ENCODE measurements at regions of chr2 and their contacts with region 1.

Region 1: GRCh38 chr2:161992526-161992925 is 81.5 kb downstream of the DPP4 start:
- H3K4me3 Mint-ChIP-seq: peak overlapping the region; percentile 27
- H3K27ac Mint-ChIP-seq: peak overlapping the region; percentile 85
- H3K4me1 Mint-ChIP-seq: peaks cover 30% of the 10 kb centered on the region
- H3K27me3 Mint-ChIP-seq: peaks cover 2% of the 10 kb centered on the region

Region 2: GRCh38 chr2:161954103-161954502 is 38.4 kb before region 1 on chr2:
- intact Hi-C with region 1: loop called (anchors 5 kb)
- H3K4me3 Mint-ChIP-seq: no peak overlapping the region
- H3K27ac Mint-ChIP-seq: no peak overlapping the region
- H3K4me1 Mint-ChIP-seq: peaks cover 20% of the 10 kb centered on the region
- H3K27me3 Mint-ChIP-seq: peaks cover 1% of the 10 kb centered on the region

Region 3: GRCh38 chr2:161961061-161961460 is 31.5 kb before region 1 on chr2:
- intact Hi-C with region 1: loop called (anchors 5 kb)
- H3K4me3 Mint-ChIP-seq: no peak overlapping the region
- H3K27ac Mint-ChIP-seq: peak overlapping the region; percentile 77
- H3K4me1 Mint-ChIP-seq: peaks cover 15% of the 10 kb centered on the region
- H3K27me3 Mint-ChIP-seq: peaks cover 1% of the 10 kb centered on the region

Region 4: GRCh38 chr2:162022290-162022945 is 29.9 kb after region 1 on chr2:
- intact Hi-C with region 1: no loop called
- H3K4me3 Mint-ChIP-seq: no peak overlapping the region
- H3K27ac Mint-ChIP-seq: no peak overlapping the region
- H3K4me1 Mint-ChIP-seq: peaks cover 6% of the 10 kb centered on the region
- H3K27me3 Mint-ChIP-seq: peaks cover 5% of the 10 kb centered on the region

Measured in dendritic cell treated with granulocyte-macrophage colony-stimulating factor and Interleukin-4, amounts not matched to agents 40 ng/mL and 50 ng/mL, for 4 days (primary cell).